Activated B cell treated with CpG ODN at 0.5 μM for 24 hours (primary cell): ENCODE measurements at regions of chr3 and their contacts with region 1.

Region 1: DNA sequence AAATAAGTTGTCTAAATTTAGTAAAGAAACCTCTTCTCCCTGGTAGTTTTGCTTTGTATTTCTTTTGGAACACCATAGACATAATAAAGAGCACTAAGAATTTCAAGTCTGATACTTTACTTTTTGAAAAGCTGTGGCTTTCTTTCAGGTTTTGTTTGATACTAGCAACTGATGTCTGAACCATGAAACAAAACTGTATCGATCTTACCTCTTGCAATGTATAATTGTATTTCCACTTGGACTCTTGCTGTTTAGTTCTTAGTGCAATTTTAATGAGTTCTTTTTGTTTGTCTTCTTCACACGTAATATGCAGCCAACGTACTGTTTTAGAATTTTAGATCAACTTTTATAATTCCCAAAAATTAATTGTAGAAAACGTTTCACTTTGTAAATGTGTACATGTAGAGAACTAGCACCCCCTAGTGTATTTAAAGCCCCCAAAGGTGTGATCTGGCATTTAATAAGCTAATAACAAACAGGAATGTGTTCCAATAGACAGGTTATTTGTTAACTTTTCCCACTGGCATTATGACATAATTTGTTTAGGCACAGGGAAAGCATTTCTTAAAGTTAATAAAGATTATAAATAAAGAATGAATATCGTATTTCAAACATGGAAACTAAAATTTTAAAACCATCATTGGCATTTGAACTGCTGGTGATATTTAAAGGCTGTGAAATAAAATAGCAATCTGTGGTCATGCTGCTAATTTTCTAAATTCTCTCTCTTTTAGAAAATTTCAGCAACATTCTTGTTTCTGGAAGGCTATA is 289.1 kb upstream of the DNAJC19 start:
- DNase-seq: no peak
- ATAC-seq: no peak
- H3K4me3 Mint-ChIP-seq: no peak overlapping the region
- H3K27ac Mint-ChIP-seq: no peak overlapping the region
- H3K4me1 Mint-ChIP-seq: no peaks in the 10 kb centered on the region
- H3K27me3 Mint-ChIP-seq: peaks cover 2% of the 10 kb centered on the region
- CTCF ChIP-seq: no peak

Region 2: DNA sequence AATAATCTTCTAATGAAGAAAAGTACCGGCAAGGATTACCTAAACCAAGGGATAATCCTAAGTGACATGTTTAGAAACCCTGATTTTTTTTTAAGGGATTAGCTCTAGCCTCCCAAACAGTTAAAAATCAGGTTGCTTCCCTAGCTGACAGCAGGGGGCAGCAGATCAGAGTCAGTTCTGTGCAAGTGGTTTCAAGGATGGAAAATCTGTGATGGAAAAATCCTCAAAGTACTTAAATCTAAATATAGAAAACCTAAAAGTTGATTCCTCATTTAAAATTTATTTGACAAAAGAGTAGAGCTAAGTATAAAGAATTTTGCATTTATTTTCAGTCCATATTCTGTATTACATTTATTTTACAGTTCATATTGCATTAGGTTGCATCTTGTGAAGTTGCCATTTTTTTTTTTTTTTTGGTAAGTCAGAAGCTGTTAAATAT is 1349.5 kb before region 1 on chr3:
- CTCF ChIA-PET with region 1: interaction called, 13 read pairs
- POLR2A ChIA-PET with region 1: no interaction called
- intact Hi-C with region 1: no loop called
- DNase-seq: no peak
- ATAC-seq: no peak
- H3K4me3 Mint-ChIP-seq: no peak overlapping the region
- H3K27ac Mint-ChIP-seq: no peak overlapping the region
- H3K4me1 Mint-ChIP-seq: no peaks in the 10 kb centered on the region
- H3K27me3 Mint-ChIP-seq: peaks cover 10% of the 10 kb centered on the region
- CTCF ChIP-seq: no peak

Region 3: DNA sequence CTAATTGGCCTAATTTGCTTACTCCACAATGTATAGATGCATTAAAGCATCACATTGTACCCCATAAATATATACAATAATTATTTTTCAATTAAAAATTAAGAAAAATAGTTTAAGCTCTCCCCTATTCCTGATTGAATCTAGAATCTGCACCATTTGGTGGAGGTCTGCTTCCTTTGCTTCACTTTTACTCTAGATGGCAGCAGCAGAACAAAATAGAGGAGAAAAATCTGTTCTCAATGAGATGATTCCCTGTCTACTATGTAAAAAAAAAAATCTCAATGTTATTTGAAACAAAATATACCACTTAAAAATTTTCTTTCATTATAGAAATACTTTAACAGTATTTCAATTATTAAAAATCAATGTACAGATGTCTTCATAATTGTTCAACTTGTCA is 475.8 kb before region 1 on chr3:
- CTCF ChIA-PET with region 1: no interaction called
- POLR2A ChIA-PET with region 1: no interaction called
- intact Hi-C with region 1: loop called (anchors 1 kb)
- DNase-seq: no peak
- ATAC-seq: no peak
- H3K4me3 Mint-ChIP-seq: no peak overlapping the region
- H3K27ac Mint-ChIP-seq: no peak overlapping the region
- H3K4me1 Mint-ChIP-seq: no peaks in the 10 kb centered on the region
- H3K27me3 Mint-ChIP-seq: peaks cover 4% of the 10 kb centered on the region
- CTCF ChIP-seq: no peak